Gastrocnemius medialis (tissue), 4 donors: ENCODE measurements at regions of chr6 and their contacts with region 1.

Region 1: DNA sequence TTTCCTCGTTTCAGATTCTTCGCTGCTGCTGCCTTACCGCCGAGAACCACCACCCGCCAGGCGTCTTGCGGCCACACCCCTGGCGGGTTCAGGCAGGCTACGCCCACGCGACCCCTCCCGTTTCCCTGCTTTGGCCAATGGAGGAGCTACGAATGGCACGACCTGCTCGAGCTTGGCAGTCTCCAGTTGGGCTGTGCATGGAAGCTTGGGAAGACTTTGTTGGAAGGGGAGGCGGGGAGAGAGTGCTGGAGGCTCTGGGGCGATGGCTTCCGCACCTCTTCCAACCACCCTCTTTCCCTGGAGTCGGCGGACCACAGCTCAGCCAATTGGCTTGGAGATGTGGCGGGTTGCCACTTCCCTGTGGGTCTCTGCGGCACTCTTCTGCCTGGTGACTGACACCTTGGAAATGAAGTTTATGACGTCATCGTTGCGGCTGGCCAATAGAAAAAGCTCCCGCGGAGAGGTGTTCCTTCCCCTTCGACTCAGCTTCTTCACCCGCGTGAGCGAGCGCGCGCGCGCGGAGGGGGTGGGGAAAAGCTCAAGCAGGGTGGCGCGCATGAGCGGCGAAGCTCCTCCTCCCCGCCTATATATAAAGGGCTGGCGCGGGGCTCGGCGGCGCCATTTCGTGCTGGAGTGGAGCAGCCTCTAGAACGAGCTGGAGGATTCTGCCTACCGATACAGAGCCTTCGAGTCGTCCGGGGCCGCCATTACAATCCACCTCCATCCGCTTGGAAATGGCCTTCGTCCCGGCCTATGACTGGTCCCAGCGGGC is 3.4 kb downstream of the BRD2 start:
- DNase-seq: peak; percentile 100
- ATAC-seq: peak; percentile 59 to 67
- H3K4me3 ChIP-seq: peak overlapping the region; percentile 95 to 97 (median 96)
- H3K27ac ChIP-seq: peak overlapping the region; percentile 97 to 100 (median 100)
- H3K4me1 ChIP-seq: peaks cover 34% of the 10 kb centered on the region in 2 donors
- H3K27me3 ChIP-seq: no peaks in the 10 kb centered on the region
- CTCF ChIP-seq: peak in 1 of 5 experiments; percentile 17
- POLR2A ChIP-seq: peak; percentile 99

Region 2: GRCh38 chr6:31822036-31822821 is 1149.5 kb before region 1 on chr6:
- in situ Hi-C with region 1: no loop called
- intact Hi-C with region 1: loop called (anchors 5 kb)
- DNase-seq: peak; percentile 93 to 97
- ATAC-seq: peak; percentile 61 to 71
- H3K4me3 ChIP-seq: peak overlapping the region; percentile 57 to 81 (median 66)
- H3K27ac ChIP-seq: peak overlapping the region; percentile 97 to 98 (median 97)
- H3K4me1 ChIP-seq: peaks cover 63 to 67% of the 10 kb centered on the region in 2 donors
- H3K27me3 ChIP-seq: no peaks in the 10 kb centered on the region
- CTCF ChIP-seq: no peak
- POLR2A ChIP-seq: peak; percentile 72 to 88

Region 3: DNA sequence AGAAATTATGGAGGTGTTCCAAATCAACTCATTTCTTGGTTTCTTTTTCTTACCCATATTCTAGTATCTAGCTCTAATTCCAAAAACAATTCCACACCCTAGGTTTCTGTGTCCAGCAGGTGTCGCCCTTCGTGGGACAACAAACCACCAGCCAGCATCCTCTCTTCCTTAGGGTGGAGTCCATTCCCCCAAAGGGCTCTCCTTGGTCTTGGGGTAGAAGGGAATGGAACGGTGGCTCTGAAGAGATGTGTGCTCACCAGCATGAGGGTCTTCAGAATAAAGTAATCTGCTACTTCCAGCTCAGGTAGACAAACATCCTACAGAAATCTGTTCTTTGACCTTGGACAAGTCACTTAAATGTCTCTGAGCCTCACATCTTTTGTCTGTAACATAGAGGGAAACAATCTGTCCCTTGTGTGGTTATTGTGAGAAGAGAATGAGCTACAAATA is 38.1 kb before region 1 on chr6:
- in situ Hi-C with region 1: loop called in 1 of 4 experiments (anchors 5 kb)
- intact Hi-C with region 1: loop called (anchors 1 kb)
- DNase-seq: peak; percentile 33 to 70
- ATAC-seq: peak; percentile 54 to 77
- H3K4me3 ChIP-seq: no peak overlapping the region
- H3K27ac ChIP-seq: no peak overlapping the region
- H3K4me1 ChIP-seq: no peaks in the 10 kb centered on the region
- H3K27me3 ChIP-seq: no peaks in the 10 kb centered on the region
- CTCF ChIP-seq: peak; percentile 74 to 88 (median 86)
- POLR2A ChIP-seq: no peak

Region 4: GRCh38 chr6:33200219-33201146 is 228.7 kb after region 1 on chr6 and contains the starts of genes RXRB and SLC39A7:
- in situ Hi-C with region 1: no loop called
- intact Hi-C with region 1: loop called (anchors 2 kb)
- DNase-seq: peak; percentile 99
- ATAC-seq: peak; percentile 81 to 86
- H3K4me3 ChIP-seq: peak within 1 kb of the TSS; percentile 84 to 98 (median 86)
- H3K27ac ChIP-seq: peak within 1 kb of the TSS; percentile 94 to 98 (median 96)
- H3K4me1 ChIP-seq: peaks cover 44 to 52% of the 10 kb centered on the region in 2 donors
- H3K27me3 ChIP-seq: no peaks in the 10 kb centered on the region
- CTCF ChIP-seq: peak in 1 of 5 experiments; percentile 20
- POLR2A ChIP-seq: peak; percentile 61 to 71
- total RNA-seq, gene RXRB: 20.8 to 38.4 (median 24.6) TPM
- total RNA-seq, gene SLC39A7: 21.9 to 45.4 (median 26.2) TPM

Region 5: DNA sequence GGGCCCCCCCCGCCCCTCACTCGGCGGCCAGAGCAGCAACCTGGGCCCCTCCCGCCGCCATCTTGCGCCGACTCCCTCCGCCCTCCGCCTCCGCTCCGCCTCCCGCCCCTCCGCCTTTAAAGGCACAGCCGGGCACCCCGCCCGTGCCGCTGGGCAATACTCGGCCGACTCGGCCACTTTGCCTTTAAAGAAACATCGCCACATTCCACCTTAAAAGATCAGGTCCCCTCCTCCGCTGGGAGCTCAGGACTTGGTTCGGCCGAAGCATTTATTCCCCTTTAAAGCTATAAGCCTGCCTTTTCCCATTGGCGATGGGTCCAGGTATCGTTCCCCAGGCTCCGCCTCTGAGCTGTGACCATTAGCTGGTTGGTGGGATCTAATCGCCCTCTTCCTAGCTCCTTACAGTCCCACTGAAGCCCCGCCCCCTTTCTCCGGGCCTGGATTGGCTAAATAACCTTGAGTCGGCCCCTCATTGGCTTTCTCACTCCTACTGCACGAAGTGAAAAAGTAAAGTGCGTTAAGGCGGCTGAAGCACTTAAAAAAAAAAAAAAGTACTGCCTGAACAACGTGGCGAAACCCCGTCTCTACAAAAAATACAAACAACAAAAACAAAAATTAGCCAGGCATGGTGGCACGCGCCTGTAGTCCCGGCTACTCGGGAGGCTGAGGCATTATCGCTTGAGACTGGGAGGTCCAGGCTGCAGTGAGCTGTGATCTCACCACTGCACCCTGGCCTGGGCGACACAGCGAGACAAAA is 346.1 kb after region 1 on chr6 and contains the start of gene ZBTB22:
- in situ Hi-C with region 1: no loop called
- intact Hi-C with region 1: loop called (anchors 1 kb)
- DNase-seq: peak; percentile 99 to 100
- ATAC-seq: peak; percentile 84 to 90
- H3K4me3 ChIP-seq: peak within 1 kb of the TSS; percentile 56 to 70 (median 64)
- H3K27ac ChIP-seq: peak within 1 kb of the TSS; percentile 82 to 93 (median 90)
- H3K4me1 ChIP-seq: peaks cover 36 to 66% of the 10 kb centered on the region in 2 donors
- H3K27me3 ChIP-seq: no peaks in the 10 kb centered on the region
- CTCF ChIP-seq: peak in 1 of 5 experiments; percentile 24
- POLR2A ChIP-seq: peak in 1 of 2 donors; percentile 56
- total RNA-seq, gene ZBTB22: 9.0 to 19.3 (median 16.3) TPM

Region 6: GRCh38 chr6:33417903-33418689 is 446.3 kb after region 1 on chr6 and contains the start of gene CUTA:
- in situ Hi-C with region 1: loop called in 1 of 4 experiments (anchors 25 kb)
- intact Hi-C with region 1: no loop called
- DNase-seq: peak; percentile 100
- ATAC-seq: peak; percentile 98
- H3K4me3 ChIP-seq: peak within 1 kb of the TSS; percentile 62 to 74 (median 72)
- H3K27ac ChIP-seq: peak within 1 kb of the TSS; percentile 84 to 94 (median 88)
- H3K4me1 ChIP-seq: peaks cover 20 to 22% of the 10 kb centered on the region in 2 donors
- H3K27me3 ChIP-seq: no peaks in the 10 kb centered on the region
- CTCF ChIP-seq: peak in 4 of 5 experiments; percentile 30 to 45 (median 43)
- POLR2A ChIP-seq: peak; percentile 59 to 74
- total RNA-seq, gene CUTA: 69.9 to 119 (median 93.2) TPM